ENCODE measurements at regions of chr18 and their contacts with region 1.

Region 1: DNA sequence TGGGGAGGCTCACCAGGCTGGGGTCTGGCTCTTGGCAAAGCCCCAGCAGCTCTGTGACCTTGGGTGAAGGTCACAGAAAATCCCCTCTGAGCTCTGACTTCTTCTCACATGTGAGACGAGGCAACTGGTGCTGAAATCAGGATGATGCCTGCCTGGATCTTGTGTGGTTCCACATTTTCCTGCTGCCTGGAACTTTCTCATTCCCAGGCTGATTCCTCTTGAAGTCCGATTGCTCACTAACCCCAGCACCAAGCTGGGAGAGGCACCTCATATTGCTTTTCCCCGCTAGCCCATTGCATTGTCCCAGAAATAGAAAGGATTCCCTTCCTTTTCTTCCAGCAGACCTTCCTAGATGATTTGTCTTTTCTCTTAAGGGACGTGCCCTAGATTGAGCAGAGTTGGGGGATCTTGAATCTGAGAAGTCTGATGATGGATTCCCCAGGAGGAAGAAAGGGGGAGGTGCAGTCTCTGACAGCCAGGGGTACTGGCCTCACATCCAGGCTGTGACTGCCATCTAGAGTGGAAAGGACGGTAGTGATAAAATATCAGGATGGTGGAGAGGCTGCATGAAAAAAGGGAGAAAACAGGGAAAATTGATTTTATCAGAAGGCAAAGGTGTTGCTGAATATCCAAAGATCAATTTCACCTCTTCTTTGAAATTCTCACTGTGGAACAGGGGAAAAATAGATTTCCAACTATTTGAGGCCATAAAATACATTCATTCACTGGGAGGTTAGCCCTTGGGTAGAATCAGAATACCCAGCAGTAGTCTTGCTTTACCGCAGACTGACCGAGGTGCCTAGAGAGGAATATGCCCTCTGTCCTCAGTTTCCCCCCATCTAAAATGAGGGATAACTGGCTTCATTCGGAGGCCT is 96.3 kb downstream of the FAM210A start:
- DNase-seq: peak in 1 of 2 donors; percentile 53
- H3K4me3 ChIP-seq: no peak overlapping the region
- H3K27ac ChIP-seq: peak overlapping the region in 1 of 2 donors; percentile 2
- H3K4me1 ChIP-seq: peaks cover 0 to 5% (median 0%) of the 10 kb centered on the region in 4 donors
- H3K27me3 ChIP-seq: no peaks in the 10 kb centered on the region
- CTCF ChIP-seq: peak; percentile 64 to 78

Region 2: DNA sequence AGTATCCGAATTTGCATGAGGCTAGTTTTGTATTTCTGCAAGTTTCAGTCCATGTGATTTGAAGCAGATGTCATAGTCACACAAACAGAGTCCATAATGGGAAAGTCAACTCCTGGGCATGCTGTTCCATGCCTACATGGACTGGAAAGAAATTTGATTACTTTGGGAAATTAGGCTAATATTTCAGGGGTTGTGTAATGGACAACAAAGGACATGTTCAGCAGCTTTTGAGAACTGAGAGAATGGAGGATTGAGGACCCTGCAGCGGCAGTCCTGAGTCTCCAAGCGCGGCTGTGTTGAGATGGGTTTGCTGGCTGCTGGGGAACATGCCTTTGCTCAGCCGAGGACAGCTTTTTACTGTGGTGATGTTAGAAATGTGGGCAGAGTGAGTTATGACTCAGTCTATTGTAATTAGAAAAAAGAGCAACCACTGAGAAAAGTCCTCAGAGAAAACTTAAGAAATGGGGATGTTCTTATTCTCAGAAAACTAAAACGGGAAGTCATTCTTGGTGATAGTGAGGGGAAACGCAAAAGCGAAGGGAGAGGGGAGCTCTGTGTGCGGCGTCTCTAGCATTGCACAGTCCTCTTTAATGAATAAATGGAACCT is 52.9 kb before region 1 on chr18:
- intact Hi-C with region 1: loop called (anchors 10 kb)
- DNase-seq: no peak
- H3K4me3 ChIP-seq: no peak overlapping the region
- H3K27ac ChIP-seq: no peak overlapping the region
- H3K4me1 ChIP-seq: no peaks in the 10 kb centered on the region
- H3K27me3 ChIP-seq: no peaks in the 10 kb centered on the region
- CTCF ChIP-seq: no peak

Region 3: GRCh38 chr18:13649397-13650390 is 19.6 kb after region 1 on chr18:
- intact Hi-C with region 1: loop called (anchors 1 kb)
- DNase-seq: no peak
- H3K4me3 ChIP-seq: no peak overlapping the region
- H3K27ac ChIP-seq: no peak overlapping the region
- H3K4me1 ChIP-seq: peaks cover 0 to 8% (median 0%) of the 10 kb centered on the region in 4 donors
- H3K27me3 ChIP-seq: no peaks in the 10 kb centered on the region
- CTCF ChIP-seq: no peak